Psoas muscle (tissue), 8 donors: ENCODE measurements at regions of chr3 and their contacts with region 1.

Region 1: DNA sequence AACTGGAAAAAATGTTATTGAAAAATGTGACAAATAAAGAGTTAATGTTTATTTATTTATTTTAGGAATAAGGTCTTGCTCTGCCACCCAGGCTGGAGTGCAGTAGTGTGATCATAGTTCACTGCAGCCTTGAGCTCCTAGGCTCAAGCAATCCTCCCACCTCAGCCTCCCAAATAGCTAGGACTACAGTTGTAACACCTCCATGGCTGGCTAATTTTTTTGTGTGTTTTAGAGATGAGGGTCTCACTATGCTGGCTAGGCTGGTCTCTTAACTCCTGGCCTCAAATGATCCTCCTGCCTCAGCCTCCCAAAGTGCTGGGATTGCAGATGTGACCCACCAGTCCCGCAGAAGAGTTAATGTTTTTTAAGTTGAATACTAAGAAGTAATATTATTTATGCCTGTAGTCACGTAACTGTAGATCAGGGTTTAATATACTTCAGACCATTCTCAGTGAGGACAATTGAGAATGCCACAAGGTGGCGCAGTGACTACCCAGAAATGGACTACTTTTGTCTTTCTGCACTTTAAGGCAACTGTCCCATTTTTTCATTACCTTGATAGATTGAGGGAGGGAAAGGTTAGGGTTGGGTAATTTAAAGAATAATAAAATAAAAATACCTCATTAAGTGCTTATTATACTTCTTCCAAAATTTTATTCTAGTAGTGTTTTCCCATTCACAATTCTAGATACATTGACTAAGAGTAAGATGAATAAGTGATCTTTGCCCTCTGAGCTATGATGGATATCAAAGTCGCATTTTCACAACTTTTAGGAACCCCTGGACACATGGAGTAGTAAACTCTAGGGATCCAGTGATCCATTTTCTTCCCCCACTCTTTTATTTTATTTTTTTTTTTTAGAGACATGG is 6.0 kb downstream of the MUC13 start:
- DNase-seq: peak; percentile 46 to 55
- ATAC-seq: peak in 2 of 4 donors; percentile 56 to 62
- H3K4me3 ChIP-seq: no peak overlapping the region
- H3K27ac ChIP-seq: no peak overlapping the region
- H3K4me1 ChIP-seq: peaks cover 7% of the 10 kb centered on the region
- H3K27me3 ChIP-seq: no peaks in the 10 kb centered on the region
- CTCF ChIP-seq: peak; percentile 61

Region 2: GRCh38 chr3:125165189-125165947 is 236.8 kb after region 1 on chr3:
- intact Hi-C with region 1: loop called in 1 of 2 experiments (anchors 5 kb)
- DNase-seq: peak; percentile 50 to 67
- ATAC-seq: peak; percentile 69 to 86 (median 82)
- H3K4me3 ChIP-seq: no peak overlapping the region
- H3K27ac ChIP-seq: no peak overlapping the region
- H3K4me1 ChIP-seq: no peaks in the 10 kb centered on the region
- H3K27me3 ChIP-seq: no peaks in the 10 kb centered on the region
- CTCF ChIP-seq: peak; percentile 62

Region 3: DNA sequence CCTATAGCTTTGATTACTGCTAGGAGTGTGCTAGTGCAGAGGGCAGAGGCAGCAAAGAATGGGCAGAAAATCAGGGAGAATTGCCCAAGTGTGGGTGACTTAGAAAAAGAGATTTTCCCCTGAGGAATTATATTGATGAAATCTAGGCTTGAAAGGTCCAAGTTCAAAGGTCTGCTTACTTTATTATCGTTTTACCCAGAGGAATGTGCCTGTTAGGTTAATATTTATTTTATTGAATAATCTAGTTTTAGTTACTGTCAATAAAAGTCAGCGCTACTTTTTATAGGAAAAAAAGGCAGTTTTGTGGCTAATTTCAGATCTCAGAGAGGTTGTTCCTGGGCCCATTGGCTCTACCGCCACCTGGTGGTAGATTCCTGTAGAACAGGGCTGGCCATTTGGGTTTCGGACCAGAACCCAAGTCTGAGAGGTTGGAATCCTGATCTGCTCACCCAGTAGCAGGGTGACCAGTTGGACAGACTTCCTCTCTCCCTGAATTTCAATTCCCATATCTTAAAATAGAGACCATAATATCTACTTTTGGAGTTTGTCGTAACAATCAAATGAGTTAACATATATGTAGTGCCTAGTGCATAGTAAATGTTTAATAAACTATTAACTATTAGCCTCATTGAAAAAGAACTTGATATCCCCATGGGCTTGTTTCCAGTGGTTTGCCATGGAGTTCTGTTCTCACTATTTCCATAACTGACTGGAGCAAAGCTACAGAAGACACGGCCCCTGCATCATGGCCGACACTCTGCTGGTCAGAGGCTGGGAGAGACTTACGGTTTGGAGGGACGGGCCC is 509.3 kb after region 1 on chr3:
- intact Hi-C with region 1: loop called in 1 of 2 experiments (anchors 5 kb)
- DNase-seq: peak; percentile 56 to 67
- ATAC-seq: peak in 3 of 4 donors; percentile 53 to 75 (median 54)
- H3K4me3 ChIP-seq: no peak overlapping the region
- H3K27ac ChIP-seq: no peak overlapping the region
- H3K4me1 ChIP-seq: no peaks in the 10 kb centered on the region
- H3K27me3 ChIP-seq: no peaks in the 10 kb centered on the region
- CTCF ChIP-seq: peak; percentile 96